ENCODE measurements at regions of chr11 and their contacts with region 1.

Region 1: DNA sequence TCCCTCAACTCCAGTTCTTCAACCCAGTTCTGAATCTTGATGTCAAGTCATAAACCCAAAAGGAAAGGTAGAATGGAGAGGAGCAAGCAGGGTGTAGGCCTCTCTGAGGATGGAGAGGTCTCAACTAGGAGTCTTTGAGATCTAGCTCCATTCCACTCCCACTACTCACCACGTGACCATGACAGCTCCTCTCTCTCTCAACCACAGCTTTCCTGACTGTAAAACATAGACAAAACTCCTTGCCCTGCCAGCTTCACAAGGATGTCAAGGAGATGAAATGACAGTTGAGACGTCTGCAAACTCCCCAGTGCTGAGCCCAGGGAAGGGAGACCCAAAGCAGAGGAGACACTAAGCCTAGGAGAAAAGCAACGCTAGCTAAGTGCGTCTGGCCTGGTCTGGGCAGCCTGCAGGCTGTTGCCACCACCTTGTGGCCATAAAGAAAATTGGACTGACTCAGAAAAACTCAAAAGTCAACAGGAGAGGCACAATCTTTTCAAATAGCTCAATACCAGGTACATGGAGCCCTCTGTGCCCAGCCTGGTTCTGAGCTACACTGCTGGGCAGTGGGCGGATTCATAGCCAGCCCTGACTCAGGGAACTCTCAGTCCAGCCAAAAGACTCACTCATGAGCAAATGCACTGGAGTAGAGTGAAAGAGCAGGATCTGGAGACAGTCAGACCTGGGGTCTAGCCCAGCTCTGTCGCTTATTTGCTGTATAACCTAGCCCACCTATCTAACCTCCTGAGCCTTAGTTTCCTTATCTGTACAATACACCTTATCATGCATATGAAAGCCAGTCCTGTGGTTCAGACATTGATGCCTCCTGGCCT is 3.4 kb downstream of the CLPB start:
- DNase-seq: peak; percentile 51
- H3K4me3 Mint-ChIP-seq: no peak overlapping the region
- H3K27ac Mint-ChIP-seq: no peak overlapping the region
- H3K4me1 Mint-ChIP-seq: peaks cover 28% of the 10 kb centered on the region
- H3K27me3 Mint-ChIP-seq: no peaks in the 10 kb centered on the region
- CTCF ChIP-seq: peak; percentile 81

Region 2: DNA sequence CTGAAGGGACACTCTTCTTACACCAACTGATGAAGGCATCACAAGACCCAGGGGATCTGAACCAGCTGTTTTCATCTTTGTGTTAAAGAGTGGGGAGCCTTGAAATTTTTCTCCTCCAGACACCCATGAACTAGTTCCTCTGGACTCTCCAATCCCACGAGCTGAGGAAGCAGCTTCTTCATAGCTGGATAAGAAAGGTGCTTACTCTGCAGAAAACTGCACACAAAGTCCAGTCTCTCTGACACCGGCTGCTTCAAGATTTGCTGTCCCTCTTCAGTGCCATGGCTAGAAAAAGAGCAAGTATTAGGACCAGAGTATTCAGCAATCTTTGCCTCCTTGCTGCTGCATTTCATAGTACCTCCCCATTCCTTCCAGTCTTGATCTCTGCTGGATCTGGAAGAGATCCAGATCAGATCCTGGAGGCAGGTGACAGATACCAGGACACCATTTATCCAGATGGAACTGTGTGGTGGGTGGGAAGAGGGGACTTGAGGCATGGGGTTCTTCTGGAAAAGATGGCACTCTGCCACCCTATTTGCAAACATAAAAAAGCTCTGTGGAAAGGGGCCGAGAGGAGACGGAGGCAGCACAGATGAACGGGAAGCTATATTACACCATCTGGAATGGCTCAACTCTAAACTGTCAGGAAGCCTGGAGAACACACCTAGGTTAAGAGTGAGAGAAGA is 406.7 kb before region 1 on chr11:
- CTCF ChIA-PET with region 1: interaction called, 12 read pairs
- POLR2A ChIA-PET with region 1: interaction called, 4 read pairs
- intact Hi-C with region 1: loop called (anchors 5 kb)
- DNase-seq: no peak
- H3K4me3 Mint-ChIP-seq: no peak overlapping the region
- H3K27ac Mint-ChIP-seq: peak overlapping the region; percentile 19
- H3K4me1 Mint-ChIP-seq: peaks cover 4% of the 10 kb centered on the region
- H3K27me3 Mint-ChIP-seq: no peaks in the 10 kb centered on the region
- CTCF ChIP-seq: no peak

Region 3: GRCh38 chr11:72189461-72190275 is 241.3 kb before region 1 on chr11:
- CTCF ChIA-PET with region 1: interaction called, 13 read pairs
- POLR2A ChIA-PET with region 1: no interaction called
- intact Hi-C with region 1: no loop called
- DNase-seq: no peak
- H3K4me3 Mint-ChIP-seq: no peak overlapping the region
- H3K27ac Mint-ChIP-seq: no peak overlapping the region
- H3K4me1 Mint-ChIP-seq: peaks cover 7% of the 10 kb centered on the region
- H3K27me3 Mint-ChIP-seq: no peaks in the 10 kb centered on the region
- CTCF ChIP-seq: no peak

Region 4: DNA sequence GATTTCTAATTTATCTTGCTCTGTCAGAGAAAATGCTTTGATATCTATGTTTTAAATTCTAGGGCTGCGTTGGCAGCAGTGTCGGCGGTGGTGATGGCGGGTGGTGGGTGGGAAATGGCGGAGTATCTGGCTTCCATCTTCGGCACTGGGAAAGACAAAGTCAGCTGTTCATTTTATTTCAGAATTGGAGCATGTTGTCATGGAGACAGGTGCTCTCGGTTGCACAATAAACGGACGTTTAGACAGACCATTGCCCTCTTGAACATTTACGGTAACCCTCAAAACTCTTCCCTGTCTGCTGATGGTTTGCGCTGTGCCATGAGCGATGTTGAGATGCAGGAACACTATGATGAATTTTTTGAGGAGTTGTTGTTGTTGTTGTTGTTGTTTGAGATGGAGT is 150.9 kb before region 1 on chr11:
- CTCF ChIA-PET with region 1: no interaction called
- POLR2A ChIA-PET with region 1: no interaction called
- intact Hi-C with region 1: no loop called
- DNase-seq: no peak
- H3K4me3 Mint-ChIP-seq: no peak overlapping the region
- H3K27ac Mint-ChIP-seq: no peak overlapping the region
- H3K4me1 Mint-ChIP-seq: peaks cover 9% of the 10 kb centered on the region
- H3K27me3 Mint-ChIP-seq: peaks cover 22% of the 10 kb centered on the region
- CTCF ChIP-seq: no peak

Region 5: DNA sequence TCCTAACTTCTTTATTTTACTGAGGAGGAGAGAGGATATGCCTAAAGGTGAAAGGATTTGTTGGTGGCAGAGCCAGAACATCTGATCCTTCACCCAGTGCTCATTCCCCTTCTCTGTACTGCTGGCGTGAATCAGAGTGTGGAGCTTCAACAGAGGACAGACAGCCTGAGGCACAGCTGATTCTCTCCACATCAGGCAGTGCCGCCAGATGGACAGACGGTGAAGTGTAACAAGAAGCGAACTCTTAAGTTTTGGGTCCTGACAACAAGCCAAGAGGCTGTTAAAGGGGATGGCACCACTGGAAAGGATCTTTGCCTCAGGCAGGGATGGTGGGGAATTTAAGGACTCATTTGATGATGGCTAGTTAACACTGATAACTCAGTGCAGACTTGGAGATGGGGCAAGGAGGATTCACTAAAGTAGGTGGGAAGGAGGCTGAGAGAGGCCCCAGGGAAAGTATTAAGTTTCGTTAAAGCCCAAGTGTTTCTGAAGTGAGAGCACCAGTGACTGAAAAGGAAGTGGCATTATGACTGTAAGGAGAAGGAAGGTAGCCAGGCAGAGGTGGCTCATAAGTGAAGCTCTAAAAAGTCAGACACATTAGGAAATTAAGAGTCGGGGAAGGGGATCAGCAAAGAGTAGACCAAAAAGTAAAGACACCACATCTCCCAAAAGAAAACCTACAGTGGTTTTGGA is 78.0 kb before region 1 on chr11:
- CTCF ChIA-PET with region 1: interaction called, 25 read pairs
- POLR2A ChIA-PET with region 1: no interaction called
- intact Hi-C with region 1: loop called (anchors 1 kb)
- DNase-seq: no peak
- H3K4me3 Mint-ChIP-seq: no peak overlapping the region
- H3K27ac Mint-ChIP-seq: no peak overlapping the region
- H3K4me1 Mint-ChIP-seq: peaks cover 9% of the 10 kb centered on the region
- H3K27me3 Mint-ChIP-seq: no peaks in the 10 kb centered on the region
- CTCF ChIP-seq: no peak

Region 6: DNA sequence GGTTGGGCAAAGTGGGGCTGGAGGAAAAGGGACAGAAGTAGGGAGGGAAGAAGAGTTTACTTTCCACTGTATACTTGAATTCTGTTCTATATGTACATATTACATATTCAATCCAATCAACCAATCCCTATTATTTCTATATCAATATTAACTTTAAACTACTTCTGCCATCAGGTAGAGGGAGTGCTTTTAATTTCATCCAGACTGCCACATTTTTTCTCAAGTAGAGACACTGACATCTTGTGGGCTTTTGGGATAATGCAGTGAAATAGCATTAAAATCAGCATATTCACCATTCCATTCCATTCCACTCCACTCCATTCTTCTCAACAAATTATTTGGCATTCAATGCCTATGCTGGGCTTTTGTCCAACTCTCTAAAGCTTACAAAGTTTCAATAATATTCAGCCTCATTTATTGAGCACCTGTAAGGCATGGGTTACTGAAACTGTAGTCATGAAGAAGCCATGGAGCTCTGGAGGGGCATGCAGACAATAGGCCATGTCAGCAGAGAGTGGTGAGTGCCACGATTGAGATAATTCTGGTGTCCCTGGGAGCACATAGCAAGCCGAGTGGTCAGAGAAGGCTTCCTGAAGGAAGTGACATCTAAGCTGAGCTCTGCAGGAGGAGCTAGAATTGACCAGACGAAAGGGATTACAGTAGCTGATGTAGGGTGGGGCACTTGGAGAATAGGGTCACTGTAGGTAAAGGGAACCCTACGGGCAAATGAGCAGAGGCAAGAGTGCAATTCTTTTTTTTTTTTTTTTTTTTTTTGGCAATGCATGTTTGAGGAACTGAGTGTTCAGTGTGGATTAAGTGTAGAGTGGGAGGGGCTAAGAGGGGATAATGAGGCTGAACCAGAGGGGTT is 16.2 kb after region 1 on chr11:
- CTCF ChIA-PET with region 1: interaction called, 23 read pairs
- POLR2A ChIA-PET with region 1: interaction called, 5 read pairs
- intact Hi-C with region 1: no loop called
- DNase-seq: peak; percentile 66
- H3K4me3 Mint-ChIP-seq: no peak overlapping the region
- H3K27ac Mint-ChIP-seq: no peak overlapping the region
- H3K4me1 Mint-ChIP-seq: no peaks in the 10 kb centered on the region
- H3K27me3 Mint-ChIP-seq: no peaks in the 10 kb centered on the region
- CTCF ChIP-seq: peak; percentile 72